CD8-positive, alpha-beta T cell (primary cell): ENCODE measurements at regions of chr1 and their contacts with region 1.

Region 1: GRCh38 chr1:204494281-204495077 is at the start of gene PIK3C2B:
- DNase-seq: peak; percentile 29 to 86 (median 69)
- ATAC-seq: peak; percentile 69
- H3K4me3 ChIP-seq: peak within 1 kb of the TSS; percentile 64 to 86
- H3K4me3 Mint-ChIP-seq: peak within 1 kb of the TSS; percentile 94
- H3K27ac ChIP-seq: peak within 1 kb of the TSS; percentile 63 to 72
- H3K27ac Mint-ChIP-seq: peak within 1 kb of the TSS; percentile 96
- H3K4me1 ChIP-seq: peaks cover 29% of the 10 kb centered on the region
- H3K4me1 Mint-ChIP-seq: peaks cover 52% of the 10 kb centered on the region
- H3K27me3 ChIP-seq: no peaks in the 10 kb centered on the region
- H3K27me3 Mint-ChIP-seq: no peaks in the 10 kb centered on the region
- CTCF ChIP-seq: no peak
- total RNA-seq, gene PIK3C2B: 32.2 to 32.6 TPM

Region 2: DNA sequence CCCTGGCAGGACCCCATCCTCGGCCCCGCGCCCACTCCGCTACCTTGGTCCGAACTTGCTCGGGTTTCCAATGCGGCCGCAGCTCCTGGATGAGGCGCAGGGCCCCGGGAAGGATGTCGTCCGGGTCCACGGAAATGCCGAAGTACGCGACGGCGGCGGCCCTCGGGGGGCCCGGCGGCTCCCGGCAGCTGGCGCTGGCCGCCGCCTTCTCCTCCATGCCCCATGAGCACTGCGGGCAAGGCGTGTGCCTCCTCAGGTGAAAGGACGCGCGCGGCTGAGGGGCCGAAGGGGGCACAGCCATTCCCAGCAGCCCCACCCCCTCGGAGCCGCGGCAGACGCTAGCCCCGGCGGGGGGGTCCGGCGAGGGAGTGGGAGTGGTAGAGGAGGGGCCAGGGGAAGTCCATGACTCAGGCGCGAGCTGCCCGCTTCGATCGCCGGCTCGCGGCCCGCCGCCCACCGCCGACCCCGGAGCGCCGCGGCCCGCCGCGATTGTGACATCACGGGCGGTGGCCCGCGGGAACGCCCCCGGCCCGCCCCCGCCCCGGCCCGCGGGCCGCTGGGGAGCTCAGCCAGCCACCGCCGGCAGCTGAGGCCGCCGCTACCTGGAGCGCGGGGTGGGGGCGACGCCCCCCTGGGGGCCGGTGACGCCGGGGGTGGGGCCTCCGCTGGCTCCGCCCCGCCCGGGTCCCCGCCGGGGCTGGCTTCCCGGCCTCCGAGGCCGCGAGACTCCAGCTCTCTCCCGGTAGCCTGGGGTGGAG is 342.7 kb before region 1 on chr1 and contains the start of gene ETNK2:
- CTCF ChIA-PET with region 1: no interaction called
- POLR2A ChIA-PET with region 1: no interaction called
- intact Hi-C with region 1: loop called in 1 of 2 experiments (anchors 5 kb)
- DNase-seq: peak; percentile 26 to 79 (median 59)
- ATAC-seq: peak; percentile 88
- H3K4me3 ChIP-seq: peak within 1 kb of the TSS; percentile 63 to 70
- H3K4me3 Mint-ChIP-seq: peak within 1 kb of the TSS; percentile 75
- H3K27ac ChIP-seq: peak within 1 kb of the TSS in 1 of 2 experiments; percentile 44
- H3K27ac Mint-ChIP-seq: peak within 1 kb of the TSS; percentile 77
- H3K4me1 ChIP-seq: peaks cover 13% of the 10 kb centered on the region
- H3K4me1 Mint-ChIP-seq: peaks cover 9% of the 10 kb centered on the region
- H3K27me3 ChIP-seq: no peaks in the 10 kb centered on the region
- H3K27me3 Mint-ChIP-seq: no peaks in the 10 kb centered on the region
- CTCF ChIP-seq: no peak
- total RNA-seq, gene ETNK2: 13.4 to 17.0 TPM

Region 3: GRCh38 chr1:204446370-204447111 is 47.9 kb before region 1 on chr1:
- CTCF ChIA-PET with region 1: interaction called, 1,205 read pairs
- POLR2A ChIA-PET with region 1: interaction called, 24 read pairs
- intact Hi-C with region 1: loop called in 1 of 2 experiments (anchors 2 kb)
- DNase-seq: peak; percentile 58 to 86 (median 81)
- ATAC-seq: peak; percentile 98
- H3K4me3 ChIP-seq: no peak overlapping the region
- H3K4me3 Mint-ChIP-seq: no peak overlapping the region
- H3K27ac ChIP-seq: no peak overlapping the region
- H3K27ac Mint-ChIP-seq: peak overlapping the region; percentile 78
- H3K4me1 ChIP-seq: peaks cover 11% of the 10 kb centered on the region
- H3K4me1 Mint-ChIP-seq: peaks cover 8% of the 10 kb centered on the region
- H3K27me3 ChIP-seq: no peaks in the 10 kb centered on the region
- H3K27me3 Mint-ChIP-seq: no peaks in the 10 kb centered on the region
- CTCF ChIP-seq: peak; percentile 65

Region 4: DNA sequence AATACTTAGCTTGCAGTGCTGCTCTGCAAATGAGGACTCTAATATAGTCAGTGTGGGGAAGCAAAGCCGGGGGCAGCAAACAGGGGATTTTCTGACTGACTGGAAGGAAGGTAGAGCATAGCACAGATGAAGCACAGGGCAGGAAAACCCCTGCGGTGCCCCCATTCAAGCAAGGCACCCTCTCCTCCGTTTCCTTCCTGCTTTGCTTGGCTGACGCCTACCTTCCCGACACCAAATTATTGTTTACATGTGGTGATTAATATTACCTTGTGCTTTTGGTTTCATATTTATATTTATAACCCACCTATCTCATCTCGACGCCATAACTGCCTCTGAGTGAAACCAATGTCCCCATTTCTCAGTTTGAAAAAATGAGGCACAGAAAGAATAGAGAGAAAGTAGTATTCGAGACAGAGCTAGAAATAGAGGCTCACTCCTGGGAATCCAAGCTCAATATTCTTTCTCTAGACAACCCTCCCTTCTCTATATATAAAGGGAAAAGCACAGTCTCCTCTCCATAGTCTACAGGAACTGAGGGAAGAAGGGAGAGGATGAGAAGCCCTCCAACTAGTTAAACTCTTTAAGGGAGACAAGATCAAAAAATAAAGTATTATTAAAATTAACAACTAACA is 41.2 kb before region 1 on chr1:
- CTCF ChIA-PET with region 1: interaction called, 1,205 read pairs
- POLR2A ChIA-PET with region 1: interaction called, 24 read pairs
- intact Hi-C with region 1: no loop called
- DNase-seq: peak; percentile 46 to 95 (median 71)
- ATAC-seq: peak; percentile 98
- H3K4me3 ChIP-seq: peak overlapping the region in 1 of 2 experiments; percentile 10
- H3K4me3 Mint-ChIP-seq: peak overlapping the region; percentile 57
- H3K27ac ChIP-seq: peak overlapping the region; percentile 13 to 75
- H3K27ac Mint-ChIP-seq: peak overlapping the region; percentile 88
- H3K4me1 ChIP-seq: peaks cover 17% of the 10 kb centered on the region
- H3K4me1 Mint-ChIP-seq: peaks cover 23% of the 10 kb centered on the region
- H3K27me3 ChIP-seq: no peaks in the 10 kb centered on the region
- H3K27me3 Mint-ChIP-seq: no peaks in the 10 kb centered on the region
- CTCF ChIP-seq: no peak

Region 5: GRCh38 chr1:204480515-204480914 is 14.0 kb before region 1 on chr1:
- CTCF ChIA-PET with region 1: interaction called, 5 read pairs
- POLR2A ChIA-PET with region 1: interaction called, 32 read pairs
- intact Hi-C with region 1: loop called in 1 of 2 experiments (anchors 2 kb)
- DNase-seq: no peak
- ATAC-seq: peak; percentile 48
- H3K4me3 ChIP-seq: no peak overlapping the region
- H3K4me3 Mint-ChIP-seq: no peak overlapping the region
- H3K27ac ChIP-seq: no peak overlapping the region
- H3K27ac Mint-ChIP-seq: no peak overlapping the region
- H3K4me1 ChIP-seq: peaks cover 31% of the 10 kb centered on the region
- H3K4me1 Mint-ChIP-seq: peaks cover 69% of the 10 kb centered on the region
- H3K27me3 ChIP-seq: no peaks in the 10 kb centered on the region
- H3K27me3 Mint-ChIP-seq: no peaks in the 10 kb centered on the region
- CTCF ChIP-seq: no peak